Keratinocyte (primary cell): ENCODE measurements at regions of chr1 and their contacts with region 1.

Region 1: DNA sequence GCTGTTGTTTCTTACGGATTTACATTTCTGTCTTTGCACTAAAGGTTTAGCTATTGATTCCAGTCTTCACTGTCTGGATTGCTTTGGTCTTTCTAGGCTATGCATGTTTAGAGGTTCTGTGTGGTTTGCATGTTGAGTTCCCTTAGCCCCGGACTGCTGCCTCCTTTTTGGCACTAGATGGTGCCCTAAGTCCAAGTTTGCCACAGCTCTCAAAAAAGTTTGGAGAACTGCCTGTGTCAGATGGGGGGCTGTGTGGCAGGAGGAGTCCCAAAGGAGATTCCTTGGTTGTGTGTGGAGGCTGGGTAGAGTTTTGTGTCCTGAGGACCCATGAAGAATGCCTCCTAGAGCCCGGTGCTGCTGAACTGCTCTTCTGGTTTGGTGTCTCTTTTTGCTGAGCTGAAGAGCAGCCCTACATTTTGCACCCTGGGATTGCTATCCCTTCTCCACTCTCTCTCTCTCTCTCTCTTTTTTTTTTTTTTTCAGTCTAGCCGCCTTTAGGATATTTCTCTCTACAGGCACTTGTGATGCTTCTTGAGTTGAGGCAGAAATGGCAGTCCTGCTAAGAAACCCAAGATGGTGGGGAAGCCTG is 74.4 kb downstream of the PTGS2 start:
- DNase-seq: no peak
- H3K4me3 ChIP-seq: no peak overlapping the region
- H3K27ac ChIP-seq: no peak overlapping the region
- H3K4me1 ChIP-seq: no peaks in the 10 kb centered on the region
- H3K27me3 ChIP-seq: no peaks in the 10 kb centered on the region
- CTCF ChIP-seq: peak; percentile 82 to 85 (median 82)

Region 2: GRCh38 chr1:186670297-186671135 is 64.7 kb after region 1 on chr1:
- dilution Hi-C with region 1: loop called (anchors 5 kb)
- DNase-seq: no peak
- H3K4me3 ChIP-seq: no peak overlapping the region
- H3K27ac ChIP-seq: no peak overlapping the region
- H3K4me1 ChIP-seq: no peaks in the 10 kb centered on the region
- H3K27me3 ChIP-seq: no peaks in the 10 kb centered on the region
- CTCF ChIP-seq: no peak

Region 3: DNA sequence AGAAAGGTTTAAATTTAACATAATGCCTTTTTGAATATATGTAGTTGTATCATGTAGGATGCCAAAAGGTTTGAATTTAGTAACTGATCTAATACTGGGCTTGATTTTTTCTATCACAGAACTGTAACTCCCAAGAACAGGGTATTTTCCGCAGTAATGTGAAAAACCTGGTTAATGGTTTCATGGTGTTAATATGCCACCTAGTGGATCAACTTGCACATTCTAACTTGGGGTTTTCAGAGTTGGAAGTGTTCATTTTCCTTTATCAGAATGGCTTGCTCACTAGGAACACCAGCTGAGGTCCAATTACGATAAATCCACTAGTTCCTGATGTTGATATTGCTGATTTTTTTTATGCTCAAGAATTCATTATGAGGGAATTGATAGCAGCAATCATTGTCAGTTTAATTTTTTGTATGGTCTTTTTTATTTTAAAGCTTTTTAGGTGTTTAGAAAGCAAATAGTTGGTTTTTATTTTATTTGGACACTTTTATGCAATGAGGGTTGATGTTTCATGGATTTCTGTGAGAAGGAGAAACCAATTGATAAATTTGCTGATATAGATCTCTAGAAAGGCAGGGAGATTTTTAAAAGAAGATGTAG is 380.1 kb after region 1 on chr1:
- dilution Hi-C with region 1: loop called (anchors 25 kb)
- DNase-seq: no peak
- H3K4me3 ChIP-seq: no peak overlapping the region
- H3K27ac ChIP-seq: no peak overlapping the region
- H3K4me1 ChIP-seq: peaks cover 4% of the 10 kb centered on the region
- H3K27me3 ChIP-seq: no peaks in the 10 kb centered on the region
- CTCF ChIP-seq: peak; percentile 27 to 62 (median 51)